B cell (primary cell): ENCODE measurements at regions of chr19 and their contacts with region 1.

Region 1: GRCh38 chr19:16330368-16330801 is 5.8 kb downstream of the KLF2 start:
- DNase-seq: peak; percentile 95
- ATAC-seq: peak; percentile 63
- H3K4me3 ChIP-seq: peak overlapping the region in 1 of 5 experiments; percentile 20
- H3K4me3 Mint-ChIP-seq: peak overlapping the region; percentile 70
- H3K27ac ChIP-seq: peak overlapping the region; percentile 23 to 35
- H3K27ac Mint-ChIP-seq: peak overlapping the region; percentile 98
- H3K4me1 ChIP-seq: peaks cover 24 to 40% of the 10 kb centered on the region in 2 donors
- H3K4me1 Mint-ChIP-seq: peaks cover 51% of the 10 kb centered on the region
- H3K27me3 ChIP-seq: no peaks in the 10 kb centered on the region
- H3K27me3 Mint-ChIP-seq: no peaks in the 10 kb centered on the region
- CTCF ChIP-seq: no peak

Region 2: GRCh38 chr19:16252459-16253205 is 77.8 kb before region 1 on chr19:
- CTCF ChIA-PET with region 1: interaction called, 101 read pairs
- POLR2A ChIA-PET with region 1: interaction called, 67 read pairs
- intact Hi-C with region 1: no loop called
- DNase-seq: peak; percentile 76
- ATAC-seq: peak; percentile 69
- H3K4me3 ChIP-seq: no peak overlapping the region
- H3K4me3 Mint-ChIP-seq: no peak overlapping the region
- H3K27ac ChIP-seq: peak overlapping the region; percentile 67 to 70
- H3K27ac Mint-ChIP-seq: no peak overlapping the region
- H3K4me1 ChIP-seq: peaks cover 57 to 94% of the 10 kb centered on the region in 2 donors
- H3K4me1 Mint-ChIP-seq: peaks cover 47% of the 10 kb centered on the region
- H3K27me3 ChIP-seq: no peaks in the 10 kb centered on the region
- H3K27me3 Mint-ChIP-seq: no peaks in the 10 kb centered on the region
- CTCF ChIP-seq: no peak

Region 3: DNA sequence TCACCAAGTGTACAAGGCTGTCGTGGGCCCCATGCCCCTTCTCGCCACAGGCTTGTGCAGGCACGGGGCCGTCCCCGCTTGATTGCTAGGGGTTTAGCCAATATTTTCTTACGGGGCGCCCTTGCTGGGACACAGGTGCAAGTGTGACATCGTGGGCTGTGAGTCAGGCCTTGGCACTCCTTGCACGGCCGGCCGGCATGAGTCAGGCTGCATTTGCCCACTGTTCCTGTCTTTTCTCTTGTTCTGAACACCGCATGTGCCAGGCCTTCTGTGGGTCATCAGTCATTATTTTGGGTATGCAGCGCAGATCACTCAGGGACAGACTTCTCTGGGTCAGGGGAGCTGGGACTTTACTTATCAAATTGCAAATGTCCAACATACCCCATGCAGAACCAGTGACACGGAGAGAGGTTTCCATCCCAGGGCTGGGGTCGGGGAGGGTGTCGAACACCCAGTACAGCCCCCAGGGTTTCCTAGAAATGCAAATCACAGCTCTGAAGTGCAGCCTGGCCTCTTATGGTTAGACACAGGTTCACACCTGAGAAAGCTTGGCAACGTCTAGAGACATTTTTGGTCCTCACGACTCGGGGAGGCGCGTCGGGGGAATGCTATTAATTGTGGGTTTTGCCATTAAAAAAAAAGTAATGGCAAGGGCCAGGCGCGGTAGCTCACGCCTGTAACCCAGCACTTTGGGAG is 28.2 kb before region 1 on chr19:
- CTCF ChIA-PET with region 1: interaction called, 3 read pairs
- POLR2A ChIA-PET with region 1: interaction called, 14 read pairs
- intact Hi-C with region 1: no loop called
- DNase-seq: peak; percentile 46
- ATAC-seq: peak; percentile 78
- H3K4me3 ChIP-seq: no peak overlapping the region
- H3K4me3 Mint-ChIP-seq: peak overlapping the region; percentile 33
- H3K27ac ChIP-seq: peak overlapping the region; percentile 44 to 48
- H3K27ac Mint-ChIP-seq: peak overlapping the region; percentile 76
- H3K4me1 ChIP-seq: peaks cover 0 to 15% of the 10 kb centered on the region in 2 donors
- H3K4me1 Mint-ChIP-seq: peaks cover 13% of the 10 kb centered on the region
- H3K27me3 ChIP-seq: no peaks in the 10 kb centered on the region
- H3K27me3 Mint-ChIP-seq: no peaks in the 10 kb centered on the region
- CTCF ChIP-seq: no peak

Region 4: GRCh38 chr19:16376649-16377048 is 46.3 kb after region 1 on chr19:
- CTCF ChIA-PET with region 1: interaction called, 100 read pairs
- POLR2A ChIA-PET with region 1: interaction called, 337 read pairs
- intact Hi-C with region 1: loop called (anchors 1 kb)
- DNase-seq: peak; percentile 52
- ATAC-seq: no peak
- H3K4me3 ChIP-seq: no peak overlapping the region
- H3K4me3 Mint-ChIP-seq: no peak overlapping the region
- H3K27ac ChIP-seq: no peak overlapping the region
- H3K27ac Mint-ChIP-seq: peak overlapping the region; percentile 74
- H3K4me1 ChIP-seq: peaks cover 93 to 100% of the 10 kb centered on the region in 2 donors
- H3K4me1 Mint-ChIP-seq: peaks cover 79% of the 10 kb centered on the region
- H3K27me3 ChIP-seq: no peaks in the 10 kb centered on the region
- H3K27me3 Mint-ChIP-seq: no peaks in the 10 kb centered on the region
- CTCF ChIP-seq: peak; percentile 52